ENCODE measurements at regions of chr3 and their contacts with region 1.

Region 1: DNA sequence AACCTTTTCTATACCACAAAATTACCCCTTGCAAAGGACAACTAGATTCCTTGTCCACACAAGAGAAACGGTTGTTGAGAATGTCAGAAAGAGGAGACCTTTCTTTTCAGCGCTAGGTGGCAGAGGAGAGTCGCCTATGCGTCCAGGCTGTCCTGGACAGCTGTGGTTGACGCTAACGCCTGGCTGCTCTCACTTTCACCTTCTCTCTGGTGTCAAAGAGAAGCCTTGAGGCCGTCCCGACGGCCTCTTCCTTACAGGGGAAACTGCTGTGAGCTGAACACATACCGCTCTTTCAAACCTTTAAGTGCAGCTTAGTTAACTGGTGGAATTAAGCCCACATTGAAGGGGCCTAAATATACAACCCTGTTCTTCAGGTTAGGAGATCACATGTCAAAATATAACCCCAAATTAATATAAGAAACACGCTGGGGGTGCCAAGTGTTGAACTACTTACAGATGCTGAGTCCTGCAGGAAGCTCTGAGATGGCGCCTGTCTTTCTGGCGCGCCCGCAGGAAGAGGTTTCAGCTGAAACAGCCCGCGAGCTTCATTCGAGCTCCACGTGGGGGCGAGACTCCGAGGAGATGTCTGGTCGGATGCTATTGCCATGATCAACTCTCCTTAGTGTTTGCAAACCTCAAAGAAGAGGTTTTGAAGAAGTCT is 26.1 kb upstream of the KBTBD8 start:
- DNase-seq: peak; percentile 56 to 83
- ATAC-seq: peak; percentile 94 to 98 (median 96)
- H3K4me3 ChIP-seq: peak overlapping the region; percentile 50
- H3K27ac ChIP-seq: no peak overlapping the region
- H3K4me1 ChIP-seq: no peaks in the 10 kb centered on the region
- H3K27me3 ChIP-seq: no peaks in the 10 kb centered on the region
- CTCF ChIP-seq: peak; percentile 88

Region 2: GRCh38 chr3:67037615-67038014 is 65.6 kb after region 1 on chr3:
- intact Hi-C with region 1: loop called (anchors 5 to 10 kb)
- DNase-seq: no peak
- ATAC-seq: no peak
- H3K4me3 ChIP-seq: no peak overlapping the region
- H3K27ac ChIP-seq: no peak overlapping the region
- H3K4me1 ChIP-seq: no peaks in the 10 kb centered on the region
- H3K27me3 ChIP-seq: peaks cover 0 to 6% (median 0%) of the 10 kb centered on the region in 3 donors
- CTCF ChIP-seq: peak; percentile 12

Region 3: GRCh38 chr3:67113802-67114407 is 141.9 kb after region 1 on chr3:
- intact Hi-C with region 1: loop called in 1 of 2 experiments (anchors 10 kb)
- DNase-seq: peak; percentile 41 to 59
- ATAC-seq: peak; percentile 61 to 82 (median 69)
- H3K4me3 ChIP-seq: no peak overlapping the region
- H3K27ac ChIP-seq: no peak overlapping the region
- H3K4me1 ChIP-seq: no peaks in the 10 kb centered on the region
- H3K27me3 ChIP-seq: no peaks in the 10 kb centered on the region
- CTCF ChIP-seq: peak; percentile 71

Region 4: DNA sequence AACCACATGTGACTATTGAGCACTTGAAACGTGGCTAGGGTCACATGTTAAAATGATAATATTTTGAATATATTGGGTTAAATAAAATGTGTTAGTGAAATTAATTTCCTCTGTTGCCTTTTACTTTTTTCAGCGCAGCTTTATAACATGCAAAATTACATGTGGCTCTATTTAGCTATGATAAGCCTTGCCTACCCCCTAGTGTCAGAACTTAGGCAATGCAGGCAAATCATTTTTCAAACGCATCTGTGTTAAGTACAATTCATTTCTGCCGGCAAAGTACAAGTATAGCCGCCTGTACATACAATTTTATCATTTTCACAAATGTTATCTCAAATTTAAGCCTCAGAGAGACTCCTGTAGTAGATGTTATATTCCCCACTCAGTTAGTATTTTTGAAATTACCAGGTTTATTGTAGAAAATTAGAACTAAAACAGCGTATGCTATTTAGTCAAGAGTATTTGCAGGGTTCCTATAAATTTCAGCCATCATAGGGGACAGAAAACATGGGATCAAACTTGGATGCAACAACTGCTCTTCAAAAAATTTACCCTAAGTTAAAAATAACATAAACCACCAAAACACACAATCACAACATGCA is 1904.2 kb after region 1 on chr3:
- intact Hi-C with region 1: loop called (anchors 10 kb)
- DNase-seq: no peak
- ATAC-seq: peak; percentile 47 to 80 (median 72)
- H3K4me3 ChIP-seq: no peak overlapping the region
- H3K27ac ChIP-seq: no peak overlapping the region
- H3K4me1 ChIP-seq: no peaks in the 10 kb centered on the region
- H3K27me3 ChIP-seq: no peaks in the 10 kb centered on the region
- CTCF ChIP-seq: peak; percentile 89

Measured in psoas muscle (tissue), 8 donors.